Activated CD4-positive, alpha-beta T cell treated with anti-CD3 and anti-CD28 coated beads, Interleukin-2, amount 10 ng/mL, durations not matched to agents 24 days and 14 days (primary cell): ENCODE measurements at regions of chr7 and their contacts with region 1.

Region 1: GRCh38 chr7:150685219-150686029 is at the start of gene GIMAP2:
- DNase-seq: peak; percentile 83
- H3K4me3 Mint-ChIP-seq: peak within 1 kb of the TSS; percentile 98
- H3K27ac Mint-ChIP-seq: peak within 1 kb of the TSS; percentile 99
- H3K4me1 Mint-ChIP-seq: peaks cover 65% of the 10 kb centered on the region
- H3K27me3 Mint-ChIP-seq: no peaks in the 10 kb centered on the region
- total RNA-seq, gene GIMAP2: 28.2 TPM in 2 replicates

Region 2: GRCh38 chr7:149790146-149790548 is 895.3 kb before region 1 on chr7:
- intact Hi-C with region 1: no loop called
- DNase-seq: peak; percentile 85
- H3K4me3 Mint-ChIP-seq: no peak overlapping the region
- H3K27ac Mint-ChIP-seq: no peak overlapping the region
- H3K4me1 Mint-ChIP-seq: no peaks in the 10 kb centered on the region
- H3K27me3 Mint-ChIP-seq: peaks cover 17% of the 10 kb centered on the region

Region 3: GRCh38 chr7:150520145-150520544 is 165.3 kb before region 1 on chr7:
- intact Hi-C with region 1: loop called (anchors 2 kb)
- DNase-seq: peak; percentile 87
- H3K4me3 Mint-ChIP-seq: peak overlapping the region; percentile 99
- H3K27ac Mint-ChIP-seq: peak overlapping the region; percentile 97
- H3K4me1 Mint-ChIP-seq: peaks cover 37% of the 10 kb centered on the region
- H3K27me3 Mint-ChIP-seq: no peaks in the 10 kb centered on the region

Region 4: GRCh38 chr7:150567169-150567568 is 118.3 kb before region 1 on chr7 and contains the start of gene GIMAP4:
- intact Hi-C with region 1: loop called (anchors 5 kb)
- DNase-seq: peak; percentile 77
- H3K4me3 Mint-ChIP-seq: peak within 1 kb of the TSS; percentile 86
- H3K27ac Mint-ChIP-seq: peak within 1 kb of the TSS; percentile 95
- H3K4me1 Mint-ChIP-seq: peaks cover 59% of the 10 kb centered on the region
- H3K27me3 Mint-ChIP-seq: no peaks in the 10 kb centered on the region
- total RNA-seq, gene GIMAP4: 61.1 and 62.7 TPM in 2 replicates

Region 5: GRCh38 chr7:150716368-150716767 is 30.9 kb after region 1 on chr7 and contains the start of gene GIMAP1:
- intact Hi-C with region 1: loop called (anchors 2 kb)
- DNase-seq: peak; percentile 91
- H3K4me3 Mint-ChIP-seq: peak within 1 kb of the TSS; percentile 89
- H3K27ac Mint-ChIP-seq: peak within 1 kb of the TSS; percentile 87
- H3K4me1 Mint-ChIP-seq: peaks cover 52% of the 10 kb centered on the region
- H3K27me3 Mint-ChIP-seq: no peaks in the 10 kb centered on the region
- total RNA-seq, gene GIMAP1: 4.9 and 6.0 TPM in 2 replicates